ENCODE measurements at regions of chr1 and their contacts with region 1.

Region 1: DNA sequence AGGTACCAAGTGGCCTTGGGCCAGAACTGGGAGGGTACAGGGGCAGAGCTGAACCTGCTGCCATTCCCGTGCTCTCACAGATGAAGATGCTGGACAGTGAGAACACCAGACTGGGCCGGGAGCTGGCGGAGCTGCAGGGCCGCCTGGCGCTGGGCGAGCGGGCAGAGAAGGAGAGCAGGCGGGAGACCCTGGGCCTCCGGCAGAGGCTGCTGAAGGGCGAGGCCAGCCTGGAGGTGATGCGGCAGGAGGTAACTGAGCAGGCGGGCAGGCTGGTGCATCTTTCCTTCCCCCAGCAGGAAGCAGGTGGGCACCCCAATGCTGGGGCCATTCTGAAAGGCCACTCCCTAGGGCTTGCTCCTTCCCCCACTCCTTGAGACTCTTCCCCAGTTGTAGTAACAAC is 21.9 kb downstream of the MFAP2 start:
- DNase-seq: no peak
- H3K4me3 ChIP-seq: no peak overlapping the region
- H3K27ac ChIP-seq: no peak overlapping the region
- H3K4me1 ChIP-seq: peaks cover 15% of the 10 kb centered on the region
- H3K27me3 ChIP-seq: no peaks in the 10 kb centered on the region
- CTCF ChIP-seq: no peak

Region 2: DNA sequence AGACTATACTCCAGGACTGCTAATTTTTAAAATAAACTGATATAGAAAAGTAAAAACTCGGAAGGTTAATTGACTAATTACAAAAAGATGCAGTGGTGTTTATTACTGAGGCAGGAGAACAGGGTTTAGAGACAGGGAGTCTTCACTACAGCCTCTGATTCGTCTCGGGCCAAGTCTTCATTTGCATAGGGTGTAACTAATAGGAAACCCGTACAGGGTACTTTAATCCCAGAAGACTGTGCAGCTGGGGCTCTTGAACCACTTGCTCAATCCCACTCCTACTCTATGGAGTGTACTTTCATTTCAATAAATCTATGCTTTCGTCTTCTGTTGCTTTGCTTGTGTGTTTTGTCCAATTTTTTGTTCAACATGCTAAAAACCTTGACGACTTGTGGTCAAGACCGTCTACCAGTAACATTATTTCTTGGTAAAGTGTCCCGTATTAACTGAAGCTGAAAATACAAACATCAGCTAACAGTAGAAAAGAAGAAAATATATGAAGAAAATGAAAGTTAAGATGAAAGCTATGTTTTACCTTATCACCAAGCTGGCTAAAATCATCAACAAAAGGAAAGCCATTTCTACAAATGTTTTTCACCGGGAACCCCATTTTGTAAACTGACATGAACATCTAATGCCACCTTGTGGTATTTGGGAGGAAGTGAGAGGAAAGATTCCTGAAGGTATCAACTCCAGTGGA is 87.3 kb after region 1 on chr1:
- intact Hi-C with region 1: loop called (anchors 5 kb)
- DNase-seq: no peak
- H3K4me3 ChIP-seq: peak overlapping the region; percentile 46
- H3K27ac ChIP-seq: peak overlapping the region; percentile 42
- H3K4me1 ChIP-seq: peaks cover 50% of the 10 kb centered on the region
- H3K27me3 ChIP-seq: no peaks in the 10 kb centered on the region
- CTCF ChIP-seq: peak; percentile 82

Measured in left ventricle myocardium inferior (tissue), 1 donor.